ENCODE measurements at regions of chr10 and their contacts with region 1.

Region 1: GRCh38 chr10:42753126-42753506 is 29.5 kb upstream of the BMS1 start:
- DNase-seq: peak; percentile 72
- ATAC-seq: peak; percentile 78
- H3K4me3 ChIP-seq: peak overlapping the region; percentile 59 to 68
- H3K27ac ChIP-seq: peak overlapping the region; percentile 63; the same call in 1 of the 2 replicates
- H3K4me1 ChIP-seq: peaks cover 8 to 29% of the 10 kb centered on the region in 2 experiments
- H3K27me3 ChIP-seq: no peaks in the 10 kb centered on the region
- CTCF ChIP-seq: peak; percentile 74 to 95 (median 77)
- POLR2A ChIP-seq: no peak
- RAD21 ChIP-seq: peak; percentile 69

Region 2: GRCh38 chr10:42638055-42638820 is 114.9 kb before region 1 on chr10 and contains the start of gene ZNF33B:
- CTCF ChIA-PET with region 1: no interaction called
- POLR2A ChIA-PET with region 1: no interaction called
- RAD21 ChIA-PET with region 1: no interaction called
- intact Hi-C with region 1: loop called (anchors 1 kb)
- DNase-seq: peak; percentile 96
- ATAC-seq: peak; percentile 93
- H3K4me3 ChIP-seq: peak within 1 kb of the TSS; percentile 67 to 75
- H3K27ac ChIP-seq: peak within 1 kb of the TSS; percentile 78
- H3K4me1 ChIP-seq: peaks cover 10 to 21% of the 10 kb centered on the region in 2 experiments
- H3K27me3 ChIP-seq: no peaks in the 10 kb centered on the region
- CTCF ChIP-seq: no peak
- POLR2A ChIP-seq: peak; percentile 91
- RAD21 ChIP-seq: no peak
- total RNA-seq, gene ZNF33B: 21.1 TPM

Region 3: GRCh38 chr10:42782446-42783180 is 29.5 kb after region 1 on chr10 and contains the start of gene BMS1:
- CTCF ChIA-PET with region 1: interaction called, 6 read pairs
- POLR2A ChIA-PET with region 1: interaction called, 12 read pairs
- RAD21 ChIA-PET with region 1: interaction called in 1 of 2 experiments, 4 read pairs
- intact Hi-C with region 1: loop called (anchors 2 kb)
- DNase-seq: peak; percentile 93
- ATAC-seq: peak; percentile 88
- H3K4me3 ChIP-seq: peak within 1 kb of the TSS; percentile 87 to 99
- H3K27ac ChIP-seq: peak within 1 kb of the TSS; percentile 94
- H3K4me1 ChIP-seq: peaks cover 14 to 19% of the 10 kb centered on the region in 2 experiments; a peak in 3 of 4 replicates
- H3K27me3 ChIP-seq: no peaks in the 10 kb centered on the region
- CTCF ChIP-seq: no peak
- POLR2A ChIP-seq: peak; percentile 89
- RAD21 ChIP-seq: no peak; the same call in 1 of the 2 replicates
- total RNA-seq, gene BMS1: 40.0 TPM

Region 4: GRCh38 chr10:42866115-42866995 is 113.2 kb after region 1 on chr10:
- CTCF ChIA-PET with region 1: no interaction called
- POLR2A ChIA-PET with region 1: no interaction called
- RAD21 ChIA-PET with region 1: no interaction called
- intact Hi-C with region 1: loop called (anchors 5 kb)
- DNase-seq: peak; percentile 47
- ATAC-seq: peak; percentile 100
- H3K4me3 ChIP-seq: no peak overlapping the region
- H3K27ac ChIP-seq: no peak overlapping the region
- H3K4me1 ChIP-seq: peaks cover 0 to 12% of the 10 kb centered on the region in 2 experiments; a peak in 3 of 4 replicates
- H3K27me3 ChIP-seq: peaks cover under 1% of the 10 kb centered on the region
- CTCF ChIP-seq: peak; percentile 66 to 81 (median 72)
- POLR2A ChIP-seq: no peak
- RAD21 ChIP-seq: peak; percentile 91

Region 5: GRCh38 chr10:43105102-43105785 is 352.1 kb after region 1 on chr10:
- CTCF ChIA-PET with region 1: no interaction called
- POLR2A ChIA-PET with region 1: no interaction called
- RAD21 ChIA-PET with region 1: no interaction called
- intact Hi-C with region 1: loop called (anchors 2 kb)
- DNase-seq: peak; percentile 41
- ATAC-seq: peak; percentile 96
- H3K4me3 ChIP-seq: peak overlapping the region; percentile 29 to 50; a peak in 3 of 4 replicates
- H3K27ac ChIP-seq: peak overlapping the region; percentile 46; the same call in 1 of the 2 replicates
- H3K4me1 ChIP-seq: peaks cover 0 to 10% of the 10 kb centered on the region in 2 experiments; a peak in 2 of 4 replicates
- H3K27me3 ChIP-seq: no peaks in the 10 kb centered on the region
- CTCF ChIP-seq: peak; percentile 88 to 98 (median 96)
- POLR2A ChIP-seq: no peak
- RAD21 ChIP-seq: peak; percentile 97